ENCODE measurements at regions of chr17 and their contacts with region 1.

Region 1: DNA sequence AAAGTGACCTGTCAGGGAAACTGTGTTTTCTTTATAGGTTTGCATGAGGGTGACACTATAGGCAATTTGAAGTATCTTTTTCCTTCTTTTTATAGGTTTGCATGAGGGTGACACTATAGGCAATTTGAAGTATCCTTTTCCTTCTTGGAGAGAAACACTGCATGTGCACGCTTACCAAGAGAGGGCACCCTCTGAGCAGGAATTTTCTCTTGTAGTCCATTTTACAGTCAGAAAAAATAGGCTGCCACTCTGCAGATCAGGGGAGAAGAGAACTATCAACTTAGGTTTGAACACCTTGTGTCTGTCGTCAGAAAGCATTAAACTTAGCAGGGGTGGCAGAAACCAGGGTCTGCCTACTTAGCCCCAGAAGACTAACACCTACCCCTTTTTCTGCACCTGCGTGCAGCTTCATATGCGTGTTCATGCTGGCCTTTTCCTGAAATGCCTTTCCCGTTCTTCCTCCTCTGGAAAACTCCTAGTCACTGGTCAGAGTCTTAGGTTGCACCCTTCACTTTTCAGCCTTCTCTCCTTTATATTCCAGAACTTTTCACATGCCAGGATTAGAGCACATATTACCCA is 16.4 kb upstream of the SMIM36 start:
- DNase-seq: no peak
- ATAC-seq: peak; percentile 40 to 89 (median 78)
- H3K4me3 ChIP-seq: no peak overlapping the region
- H3K27ac ChIP-seq: no peak overlapping the region
- H3K4me1 ChIP-seq: no peaks in the 10 kb centered on the region
- H3K27me3 ChIP-seq: no peaks in the 10 kb centered on the region
- CTCF ChIP-seq: peak; percentile 70

Region 2: GRCh38 chr17:55117164-55117563 is 410.5 kb before region 1 on chr17:
- intact Hi-C with region 1: no loop called
- DNase-seq: no peak
- ATAC-seq: no peak
- H3K4me3 ChIP-seq: no peak overlapping the region
- H3K27ac ChIP-seq: no peak overlapping the region
- H3K4me1 ChIP-seq: no peaks in the 10 kb centered on the region
- H3K27me3 ChIP-seq: no peaks in the 10 kb centered on the region
- CTCF ChIP-seq: no peak

Region 3: DNA sequence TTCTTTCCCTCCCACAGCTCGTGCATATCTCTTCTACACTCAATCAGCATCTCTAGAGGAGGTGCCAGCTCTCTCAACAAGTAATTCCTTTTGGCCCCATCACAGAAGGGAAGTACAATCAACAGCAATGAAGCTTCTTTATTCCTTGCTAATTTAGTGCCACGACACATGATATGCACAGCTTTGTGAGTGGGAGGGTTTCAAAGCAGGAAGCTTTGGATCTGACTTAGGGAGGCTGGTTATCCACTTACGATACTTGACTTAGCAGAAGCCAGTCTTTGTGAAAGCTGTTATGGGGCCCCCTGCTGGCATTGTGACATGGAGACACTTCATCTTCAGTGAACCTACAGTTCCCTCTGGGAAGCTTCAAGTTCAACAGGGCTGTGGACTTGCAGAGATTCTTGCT is 114.0 kb after region 1 on chr17:
- intact Hi-C with region 1: loop called (anchors 2 to 5 kb)
- DNase-seq: peak; percentile 60 to 72
- ATAC-seq: peak in 2 of 4 donors; percentile 44 to 51
- H3K4me3 ChIP-seq: no peak overlapping the region
- H3K27ac ChIP-seq: no peak overlapping the region
- H3K4me1 ChIP-seq: peaks cover 7% of the 10 kb centered on the region
- H3K27me3 ChIP-seq: no peaks in the 10 kb centered on the region
- CTCF ChIP-seq: peak; percentile 54

Region 4: GRCh38 chr17:55770148-55770870 is 242.7 kb after region 1 on chr17:
- intact Hi-C with region 1: loop called (anchors 1 to 2 kb)
- DNase-seq: no peak
- ATAC-seq: peak; percentile 81 to 88 (median 84)
- H3K4me3 ChIP-seq: no peak overlapping the region
- H3K27ac ChIP-seq: peak overlapping the region; percentile 65
- H3K4me1 ChIP-seq: peaks cover 9% of the 10 kb centered on the region
- H3K27me3 ChIP-seq: no peaks in the 10 kb centered on the region
- CTCF ChIP-seq: peak; percentile 72

Region 5: GRCh38 chr17:55825213-55825612 is 297.6 kb after region 1 on chr17:
- intact Hi-C with region 1: loop called in 1 of 2 experiments (anchors 2 kb)
- DNase-seq: no peak
- ATAC-seq: peak in 3 of 4 donors; percentile 48 to 73 (median 57)
- H3K4me3 ChIP-seq: no peak overlapping the region
- H3K27ac ChIP-seq: no peak overlapping the region
- H3K4me1 ChIP-seq: no peaks in the 10 kb centered on the region
- H3K27me3 ChIP-seq: no peaks in the 10 kb centered on the region
- CTCF ChIP-seq: peak; percentile 51

Region 6: DNA sequence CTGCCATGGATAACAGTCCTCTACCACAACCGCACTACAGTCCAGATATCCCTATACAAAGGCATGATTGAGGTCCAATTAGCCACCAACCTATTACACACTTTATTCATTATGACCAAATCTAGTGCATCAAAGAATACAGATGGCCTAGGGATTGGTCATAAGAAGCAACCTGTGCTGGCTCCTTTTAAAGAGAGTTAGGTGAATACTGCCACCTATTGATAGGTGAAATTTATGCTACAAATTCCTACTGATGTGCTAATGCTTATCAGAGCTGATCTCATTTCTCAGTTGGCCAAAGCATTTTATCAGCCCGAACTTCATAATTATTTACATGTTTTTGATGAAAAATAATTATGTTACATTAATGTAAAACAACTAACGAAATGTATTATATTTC is 791.9 kb after region 1 on chr17:
- intact Hi-C with region 1: loop called in 1 of 2 experiments (anchors 5 kb)
- DNase-seq: no peak
- ATAC-seq: peak; percentile 75 to 92 (median 82)
- H3K4me3 ChIP-seq: no peak overlapping the region
- H3K27ac ChIP-seq: no peak overlapping the region
- H3K4me1 ChIP-seq: no peaks in the 10 kb centered on the region
- H3K27me3 ChIP-seq: peaks cover 0 to 4% (median 0%) of the 10 kb centered on the region in 3 donors
- CTCF ChIP-seq: peak; percentile 69

Measured in psoas muscle (tissue), 8 donors.